ENCODE measurements at regions of chr22 and their contacts with region 1.

Region 1: DNA sequence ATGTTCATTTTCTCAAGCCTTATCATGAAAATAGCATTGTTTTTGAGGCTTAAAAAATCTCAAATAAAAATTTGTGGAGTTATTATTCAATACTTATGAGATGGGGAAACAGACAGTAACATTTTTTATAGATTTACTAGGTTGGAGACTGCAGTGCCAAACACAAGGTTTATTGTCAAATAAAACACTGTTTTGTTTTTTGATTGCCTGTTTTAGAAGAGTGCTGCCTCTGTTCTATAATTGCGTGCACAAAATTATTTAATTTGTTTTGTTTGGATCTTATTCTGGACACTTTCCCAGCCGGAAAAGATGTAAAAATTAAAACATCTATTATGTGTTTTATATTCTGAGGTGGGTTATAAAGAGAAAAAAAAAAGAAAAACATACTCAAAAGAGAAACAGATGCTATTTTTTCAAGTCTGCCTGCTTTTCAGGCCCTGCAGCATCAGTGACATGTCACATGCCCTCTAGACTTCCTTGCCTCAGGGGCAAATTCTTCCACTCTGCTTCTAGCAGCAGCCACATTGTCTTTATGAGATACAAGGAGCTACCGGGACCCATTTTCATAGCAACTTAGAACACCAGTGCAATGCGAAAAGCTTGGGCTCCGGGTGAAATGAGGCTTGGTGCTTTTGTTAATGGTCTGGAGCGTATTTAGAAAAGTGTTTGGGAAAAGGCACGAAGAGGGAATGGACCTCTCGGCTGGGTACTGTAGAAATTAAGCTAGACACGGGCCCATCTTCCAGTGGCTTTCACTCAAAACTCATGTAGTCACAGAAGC is 77.5 kb downstream of the EFCAB6 start:
- DNase-seq: no peak
- ATAC-seq: peak; percentile 58
- H3K4me3 ChIP-seq: no peak overlapping the region
- H3K27ac ChIP-seq: no peak overlapping the region
- H3K4me1 ChIP-seq: no peaks in the 10 kb centered on the region
- H3K27me3 ChIP-seq: no peaks in the 10 kb centered on the region
- CTCF ChIP-seq: no peak

Region 2: GRCh38 chr22:43567691-43568318 is 166.8 kb before region 1 on chr22:
- CTCF ChIA-PET with region 1: no interaction called
- POLR2A ChIA-PET with region 1: no interaction called
- intact Hi-C with region 1: loop called (anchors 5 kb)
- DNase-seq: no peak
- ATAC-seq: no peak
- H3K4me3 ChIP-seq: no peak overlapping the region
- H3K27ac ChIP-seq: no peak overlapping the region
- H3K4me1 ChIP-seq: no peaks in the 10 kb centered on the region
- H3K27me3 ChIP-seq: peaks cover 19% of the 10 kb centered on the region
- CTCF ChIP-seq: no peak

Region 3: DNA sequence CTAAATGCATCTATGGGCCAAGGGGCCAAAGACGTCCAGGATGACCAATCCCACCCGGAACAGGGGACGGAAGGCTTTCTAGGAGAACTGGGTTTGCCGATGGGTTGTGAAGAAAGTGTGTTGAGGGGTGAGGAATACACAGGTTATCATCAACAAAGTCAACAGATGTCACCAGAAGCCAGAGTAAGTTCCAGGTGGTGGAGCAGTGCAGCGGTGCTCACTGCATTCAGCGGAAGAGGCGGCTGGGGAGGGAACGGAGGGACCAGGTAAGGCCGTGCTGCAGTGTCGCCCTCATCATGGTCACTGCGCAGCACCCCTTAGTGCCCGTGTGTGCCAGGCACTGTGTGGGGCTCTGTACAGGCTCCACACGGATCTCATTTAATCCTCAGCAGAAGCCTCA is 98.5 kb before region 1 on chr22:
- CTCF ChIA-PET with region 1: no interaction called
- POLR2A ChIA-PET with region 1: no interaction called
- intact Hi-C with region 1: loop called (anchors 5 kb)
- DNase-seq: no peak
- ATAC-seq: no peak
- H3K4me3 ChIP-seq: no peak overlapping the region
- H3K27ac ChIP-seq: no peak overlapping the region
- H3K4me1 ChIP-seq: no peaks in the 10 kb centered on the region
- H3K27me3 ChIP-seq: no peaks in the 10 kb centered on the region
- CTCF ChIP-seq: no peak

Measured in PC-3 (cell line).